Lower leg skin (tissue), 4 donors: ENCODE measurements at regions of chr21 and their contacts with region 1.

Region 1: DNA sequence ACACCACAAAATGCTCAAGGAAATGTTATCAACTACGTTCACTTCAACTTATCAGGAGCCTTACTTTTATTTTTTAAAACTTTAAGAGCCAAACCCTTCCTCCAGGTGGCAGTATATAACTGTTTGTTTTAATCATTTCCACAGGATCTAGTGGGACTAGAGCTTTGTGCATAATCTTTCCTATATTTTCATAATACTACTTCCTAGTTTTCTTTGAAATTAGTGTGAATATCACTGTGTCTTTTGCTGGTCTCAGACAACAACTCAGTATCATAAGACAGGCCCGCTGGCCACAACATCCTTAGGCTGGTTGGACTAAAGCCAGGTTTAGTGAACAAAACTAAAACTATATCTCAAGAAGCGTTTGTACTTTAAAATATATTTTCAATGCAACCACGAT is 145.5 kb downstream of the TIAM1 start:
- DNase-seq: no peak
- H3K4me3 ChIP-seq: no peak overlapping the region
- CTCF ChIP-seq: no peak
- POLR2A ChIP-seq: no peak

Region 2: GRCh38 chr21:31604591-31605190 is 406.1 kb after region 1 on chr21:
- intact Hi-C with region 1: loop called (anchors 10 kb)
- DNase-seq: peak; percentile 27 to 92
- H3K4me3 ChIP-seq: no peak overlapping the region
- CTCF ChIP-seq: no peak
- POLR2A ChIP-seq: no peak